A549 (cell line): ENCODE measurements at regions of chr6 and their contacts with region 1.

Region 1: GRCh38 chr6:34067814-34068213 is 78.1 kb downstream of the GRM4 start:
- DNase-seq: peak; percentile 13 to 37
- ATAC-seq: peak; percentile 28 to 77; a peak in 3 of 6 replicates
- H3K4me3 ChIP-seq: no peak overlapping the region
- H3K27ac ChIP-seq: no peak overlapping the region
- H3K4me1 ChIP-seq: no peaks in the 10 kb centered on the region
- CTCF ChIP-seq: 0 out of 3 replicates have a peak, but pooled peaks have one; percentile 11
- EP300 ChIP-seq: no peak
- POLR2A ChIP-seq: no peak
- RAD21 ChIP-seq: peak in 1 of 2 experiments; percentile 50; a peak in 3 of 5 replicates

Region 2: GRCh38 chr6:34154668-34155447 is 87.0 kb after region 1 on chr6:
- CTCF ChIA-PET with region 1: interaction called, 10 read pairs
- POLR2A ChIA-PET with region 1: no interaction called
- DNase-seq: peak; percentile 22 to 62
- ATAC-seq: peak; percentile 57 to 91
- H3K4me3 ChIP-seq: 0 out of 3 replicates have a peak overlapping the region, but pooled peaks have one; percentile 30
- H3K27ac ChIP-seq: peak overlapping the region; percentile 57 to 76; a peak in 3 of 6 replicates
- H3K4me1 ChIP-seq: no peaks in the 10 kb centered on the region
- CTCF ChIP-seq: peak; percentile 83
- EP300 ChIP-seq: no peak
- POLR2A ChIP-seq: no peak
- RAD21 ChIP-seq: peak; percentile 86 to 95